Ovary (tissue), 10 donors: ENCODE measurements at regions of chr20 and their contacts with region 1.

Region 1: DNA sequence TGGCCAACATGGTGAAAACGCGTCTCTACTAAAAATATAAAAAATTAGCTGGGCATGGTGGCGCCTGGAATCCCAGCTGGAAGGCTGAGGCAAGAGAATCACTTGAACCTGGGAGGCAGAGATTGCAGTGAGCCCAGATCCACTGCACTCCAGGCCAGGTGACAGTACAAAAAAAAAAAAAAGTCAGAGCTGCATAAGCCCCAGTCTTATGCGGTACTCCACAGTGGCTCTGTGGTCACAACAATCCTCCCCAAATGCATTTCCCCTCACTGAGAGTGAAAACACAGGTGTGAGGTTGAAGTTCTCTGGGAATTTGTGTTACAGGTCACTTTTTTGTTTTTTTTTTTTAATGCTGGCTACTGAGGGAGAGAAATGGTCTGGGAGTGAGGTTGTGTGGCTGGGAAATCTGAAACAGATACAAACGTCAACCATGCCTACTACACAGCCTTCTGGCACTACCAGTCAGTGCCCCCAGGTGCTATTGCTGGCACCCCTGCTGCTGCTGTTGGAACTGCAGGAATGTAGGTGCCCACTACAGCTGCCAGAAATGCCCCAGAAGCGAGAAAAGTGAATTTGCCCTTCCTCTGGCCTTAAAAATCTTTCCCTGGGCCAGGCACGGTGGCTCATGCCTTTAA is 5.7 kb downstream of the MRPS26 start:
- DNase-seq: no peak
- H3K4me3 ChIP-seq: no peak overlapping the region
- H3K27ac ChIP-seq: no peak overlapping the region
- H3K4me1 ChIP-seq: peaks cover 5% of the 10 kb centered on the region
- H3K27me3 ChIP-seq: no peaks in the 10 kb centered on the region
- CTCF ChIP-seq: no peak
- EP300 ChIP-seq: no peak
- POLR2A ChIP-seq: no peak

Region 2: GRCh38 chr20:1125277-1125676 is 1926.2 kb before region 1 on chr20:
- intact Hi-C with region 1: loop called in 1 of 4 experiments (anchors 5 kb)
- DNase-seq: no peak
- H3K4me3 ChIP-seq: no peak overlapping the region
- H3K27ac ChIP-seq: no peak overlapping the region
- H3K4me1 ChIP-seq: peaks cover 9% of the 10 kb centered on the region
- H3K27me3 ChIP-seq: no peaks in the 10 kb centered on the region
- CTCF ChIP-seq: no peak
- EP300 ChIP-seq: no peak
- POLR2A ChIP-seq: no peak

Region 3: GRCh38 chr20:3101737-3102574 is 50.5 kb after region 1 on chr20:
- intact Hi-C with region 1: no loop called
- DNase-seq: no peak
- H3K4me3 ChIP-seq: no peak overlapping the region
- H3K27ac ChIP-seq: no peak overlapping the region
- H3K4me1 ChIP-seq: no peaks in the 10 kb centered on the region
- H3K27me3 ChIP-seq: no peaks in the 10 kb centered on the region
- CTCF ChIP-seq: no peak
- EP300 ChIP-seq: no peak
- POLR2A ChIP-seq: no peak

Region 4: GRCh38 chr20:3115190-3116107 is 63.9 kb after region 1 on chr20:
- intact Hi-C with region 1: loop called in 3 of 4 experiments (anchors 5 to 10 kb)
- DNase-seq: peak in 3 of 5 donors; percentile 22 to 45 (median 35)
- H3K4me3 ChIP-seq: no peak overlapping the region
- H3K27ac ChIP-seq: no peak overlapping the region
- H3K4me1 ChIP-seq: no peaks in the 10 kb centered on the region
- H3K27me3 ChIP-seq: no peaks in the 10 kb centered on the region
- CTCF ChIP-seq: peak; percentile 12 to 74 (median 43)
- EP300 ChIP-seq: no peak
- POLR2A ChIP-seq: no peak

Region 5: DNA sequence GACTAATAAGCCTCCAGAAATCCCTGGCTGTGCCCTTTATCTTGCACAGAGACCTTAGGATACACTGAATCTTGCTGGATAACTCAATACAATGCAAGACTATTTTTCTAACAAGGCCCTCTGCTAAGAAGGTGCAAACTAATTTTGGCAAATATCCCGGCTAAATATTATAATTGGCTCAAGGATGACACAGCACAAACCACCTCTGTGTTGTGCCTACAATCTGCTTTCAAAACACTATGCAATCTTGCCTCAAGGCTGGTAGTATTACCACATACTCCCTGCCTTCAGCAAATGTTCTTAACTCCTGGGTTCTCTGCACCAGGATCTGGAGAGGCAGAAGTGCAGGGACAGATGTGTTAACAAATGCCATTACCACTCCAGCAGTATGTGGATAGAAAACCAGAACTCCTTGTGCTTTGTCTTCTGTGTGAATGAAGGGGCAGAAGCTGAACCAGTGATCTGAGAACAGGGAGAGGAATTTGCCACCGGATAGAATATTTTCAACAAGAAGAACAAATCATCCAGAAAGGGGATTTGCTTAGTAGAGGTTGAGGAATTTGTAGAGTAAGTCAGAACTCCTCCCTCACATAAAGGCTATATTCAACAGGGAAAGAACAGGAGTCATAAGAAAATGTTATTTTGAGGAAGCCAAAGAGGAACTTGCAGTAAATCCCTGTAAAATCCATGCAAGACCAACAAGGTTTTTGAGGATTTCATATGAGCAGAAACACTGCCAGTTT is 261.6 kb after region 1 on chr20:
- intact Hi-C with region 1: loop called in 1 of 4 experiments (anchors 10 kb)
- DNase-seq: no peak
- H3K4me3 ChIP-seq: no peak overlapping the region
- H3K27ac ChIP-seq: no peak overlapping the region
- H3K4me1 ChIP-seq: peaks cover 2% of the 10 kb centered on the region
- H3K27me3 ChIP-seq: no peaks in the 10 kb centered on the region
- CTCF ChIP-seq: no peak
- EP300 ChIP-seq: no peak
- POLR2A ChIP-seq: no peak